CD4-positive, alpha-beta T cell (primary cell): ENCODE measurements at regions of chr7 and their contacts with region 1.

Region 1: GRCh38 chr7:151519765-151520418 is at the start of gene RHEB:
- DNase-seq: peak; percentile 97 to 99 (median 98)
- ATAC-seq: peak; percentile 85
- H3K4me3 ChIP-seq: peak within 1 kb of the TSS; percentile 62
- H3K4me3 Mint-ChIP-seq: peak within 1 kb of the TSS; percentile 99
- H3K27ac ChIP-seq: peak within 1 kb of the TSS; percentile 79
- H3K27ac Mint-ChIP-seq: peak within 1 kb of the TSS; percentile 98
- H3K4me1 ChIP-seq: peaks cover 37% of the 10 kb centered on the region
- H3K4me1 Mint-ChIP-seq: peaks cover 44% of the 10 kb centered on the region
- H3K27me3 ChIP-seq: no peaks in the 10 kb centered on the region
- H3K27me3 Mint-ChIP-seq: no peaks in the 10 kb centered on the region
- CTCF ChIP-seq: no peak
- total RNA-seq, gene RHEB: 40.3 to 42.6 TPM

Region 2: DNA sequence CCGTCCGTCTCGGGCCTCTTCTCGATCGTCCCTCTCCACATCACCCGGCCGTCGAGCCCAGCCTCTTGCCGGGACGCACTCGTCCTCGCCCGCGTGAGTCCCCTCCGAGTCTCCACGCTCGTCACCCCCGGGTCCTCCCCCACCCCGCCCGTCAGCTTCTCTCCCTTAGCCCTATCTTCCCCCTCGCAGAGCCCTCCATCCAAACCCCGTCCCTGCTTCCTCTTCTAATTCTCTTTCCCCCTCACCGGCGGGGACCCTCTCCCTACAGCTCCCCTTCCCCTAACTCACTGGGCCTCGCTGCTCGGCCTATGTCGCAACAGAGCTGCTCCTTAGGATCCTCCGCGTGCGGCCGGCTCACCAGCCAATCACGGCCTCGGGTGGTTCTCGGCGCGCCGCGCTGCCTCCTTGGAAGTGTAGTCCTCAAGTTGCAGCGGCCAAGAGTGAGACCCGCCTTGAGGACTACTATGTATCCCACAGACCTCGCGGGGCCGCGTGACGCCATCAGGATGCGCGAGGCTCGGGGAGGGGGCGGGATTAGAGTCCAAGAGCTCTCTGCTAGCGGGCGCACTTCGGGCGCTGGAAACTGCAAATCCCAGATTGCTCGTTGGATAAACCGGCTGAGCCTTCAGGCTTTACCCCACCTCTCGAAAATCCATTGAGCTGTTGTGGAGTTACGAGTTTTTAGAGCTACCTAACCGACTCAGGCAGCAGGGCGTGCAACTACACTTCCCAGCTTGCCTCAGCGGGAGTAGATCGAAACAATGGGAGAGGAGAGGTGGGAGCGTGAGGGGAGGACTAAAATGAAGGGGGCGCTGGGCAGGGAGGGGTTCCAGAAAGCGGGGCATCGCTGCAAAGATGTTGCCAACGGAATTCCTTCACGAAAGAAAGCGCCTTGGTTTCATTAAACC is 292.8 kb before region 1 on chr7 and contains the start of gene ABCF2:
- CTCF ChIA-PET with region 1: no interaction called
- POLR2A ChIA-PET with region 1: no interaction called
- intact Hi-C with region 1: loop called in 1 of 2 experiments (anchors 5 kb)
- DNase-seq: peak; percentile 93 to 99 (median 97)
- ATAC-seq: peak; percentile 99
- H3K4me3 ChIP-seq: peak within 1 kb of the TSS; percentile 90
- H3K4me3 Mint-ChIP-seq: peak within 1 kb of the TSS; percentile 99
- H3K27ac ChIP-seq: peak within 1 kb of the TSS; percentile 63 to 71
- H3K27ac Mint-ChIP-seq: peak within 1 kb of the TSS; percentile 90
- H3K4me1 ChIP-seq: peaks cover 38% of the 10 kb centered on the region
- H3K4me1 Mint-ChIP-seq: peaks cover 41% of the 10 kb centered on the region
- H3K27me3 ChIP-seq: no peaks in the 10 kb centered on the region
- H3K27me3 Mint-ChIP-seq: no peaks in the 10 kb centered on the region
- CTCF ChIP-seq: no peak
- total RNA-seq, gene ABCF2: 12.3 to 13.2 TPM

Region 3: DNA sequence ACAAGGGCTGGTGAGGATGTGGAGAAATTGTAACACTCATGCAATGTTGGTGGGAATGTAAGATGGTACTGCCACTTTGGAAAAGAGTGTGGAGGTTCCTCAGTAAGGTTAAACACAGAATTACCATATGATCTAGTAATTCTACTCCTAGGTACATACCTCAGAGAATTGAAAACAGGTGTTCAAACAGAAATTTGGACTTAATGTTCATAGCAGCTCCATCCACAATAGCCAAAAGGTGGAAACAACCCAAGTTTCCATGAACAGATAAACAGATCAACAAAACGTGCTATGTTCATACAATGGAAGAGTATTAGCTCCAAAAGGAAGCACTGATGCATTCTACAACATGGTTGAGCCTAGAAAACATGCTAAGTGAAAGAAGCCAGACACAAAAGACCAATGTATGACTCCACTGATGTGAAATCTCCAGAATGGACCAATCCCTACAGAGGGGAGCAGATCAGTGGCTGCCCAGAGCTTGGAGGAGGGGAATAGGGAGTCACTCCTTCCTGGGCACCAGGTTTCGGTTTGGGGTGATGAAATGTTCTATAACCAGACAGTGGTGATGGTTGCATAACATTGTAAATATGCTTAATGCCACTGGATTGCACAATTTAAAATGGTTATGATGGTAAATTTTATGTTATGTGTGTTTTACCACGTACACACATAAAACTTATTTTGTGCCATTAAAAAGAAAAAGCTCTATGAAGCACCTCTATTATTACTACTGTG is 104.3 kb before region 1 on chr7:
- CTCF ChIA-PET with region 1: no interaction called
- POLR2A ChIA-PET with region 1: no interaction called
- intact Hi-C with region 1: no loop called
- DNase-seq: peak in 3 of 14 experiments; percentile 23 to 70 (median 52)
- ATAC-seq: no peak
- H3K4me3 ChIP-seq: no peak overlapping the region
- H3K4me3 Mint-ChIP-seq: no peak overlapping the region
- H3K27ac ChIP-seq: no peak overlapping the region
- H3K27ac Mint-ChIP-seq: no peak overlapping the region
- H3K4me1 ChIP-seq: peaks cover 19% of the 10 kb centered on the region
- H3K4me1 Mint-ChIP-seq: peaks cover 14% of the 10 kb centered on the region
- H3K27me3 ChIP-seq: peaks cover 9 to 12% of the 10 kb centered on the region in 2 experiments
- H3K27me3 Mint-ChIP-seq: peaks cover 21% of the 10 kb centered on the region
- CTCF ChIP-seq: no peak

Region 4: DNA sequence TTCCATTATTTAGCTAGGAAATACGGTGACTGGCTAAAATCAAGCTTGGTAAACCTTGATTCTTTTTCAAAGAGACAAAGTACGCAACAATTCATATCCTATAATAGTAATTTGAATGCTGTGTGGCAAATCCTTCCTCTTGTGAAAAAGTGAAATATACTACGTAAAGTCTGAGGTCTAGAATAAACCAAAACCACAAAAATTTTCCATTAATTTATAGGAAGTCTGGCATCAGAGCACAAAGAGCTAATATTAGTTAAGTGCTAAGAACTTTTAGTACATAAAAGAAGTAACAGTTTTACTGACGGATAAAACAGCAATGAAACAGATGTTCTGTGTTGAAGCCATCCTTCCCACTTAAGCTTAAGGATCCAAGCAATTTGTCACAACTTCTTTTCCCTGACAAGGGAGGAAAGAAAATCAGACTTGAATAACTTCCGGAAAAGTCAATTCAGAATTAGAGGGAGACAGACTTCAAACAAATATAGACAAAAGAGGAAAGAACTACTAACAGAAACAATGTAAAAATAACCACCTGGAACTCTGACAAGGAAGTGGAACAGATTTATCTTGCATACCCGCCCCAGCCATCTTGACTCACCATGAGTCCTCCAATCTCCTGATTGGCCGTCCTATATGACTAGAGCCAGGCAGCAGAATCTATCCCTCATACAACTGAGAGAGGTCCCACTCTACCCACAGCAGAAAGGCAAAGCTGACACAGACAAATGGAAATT is 34.8 kb before region 1 on chr7:
- CTCF ChIA-PET with region 1: interaction called, 4 read pairs
- POLR2A ChIA-PET with region 1: interaction called, 4 read pairs
- intact Hi-C with region 1: loop called in 1 of 2 experiments (anchors 5 kb)
- DNase-seq: peak in 2 of 14 experiments; percentile 37 to 41
- ATAC-seq: no peak
- H3K4me3 ChIP-seq: no peak overlapping the region
- H3K4me3 Mint-ChIP-seq: no peak overlapping the region
- H3K27ac ChIP-seq: no peak overlapping the region
- H3K27ac Mint-ChIP-seq: no peak overlapping the region
- H3K4me1 ChIP-seq: no peaks in the 10 kb centered on the region
- H3K4me1 Mint-ChIP-seq: peaks cover 14% of the 10 kb centered on the region
- H3K27me3 ChIP-seq: no peaks in the 10 kb centered on the region
- H3K27me3 Mint-ChIP-seq: no peaks in the 10 kb centered on the region
- CTCF ChIP-seq: no peak

Region 5: GRCh38 chr7:151711906-151712809 is 192.3 kb after region 1 on chr7:
- CTCF ChIA-PET with region 1: no interaction called
- POLR2A ChIA-PET with region 1: no interaction called
- intact Hi-C with region 1: no loop called
- DNase-seq: no peak
- ATAC-seq: no peak
- H3K4me3 ChIP-seq: no peak overlapping the region
- H3K4me3 Mint-ChIP-seq: no peak overlapping the region
- H3K27ac ChIP-seq: no peak overlapping the region
- H3K27ac Mint-ChIP-seq: no peak overlapping the region
- H3K4me1 ChIP-seq: no peaks in the 10 kb centered on the region
- H3K4me1 Mint-ChIP-seq: peaks cover 5% of the 10 kb centered on the region
- H3K27me3 ChIP-seq: no peaks in the 10 kb centered on the region
- H3K27me3 Mint-ChIP-seq: no peaks in the 10 kb centered on the region
- CTCF ChIP-seq: no peak

Region 6: DNA sequence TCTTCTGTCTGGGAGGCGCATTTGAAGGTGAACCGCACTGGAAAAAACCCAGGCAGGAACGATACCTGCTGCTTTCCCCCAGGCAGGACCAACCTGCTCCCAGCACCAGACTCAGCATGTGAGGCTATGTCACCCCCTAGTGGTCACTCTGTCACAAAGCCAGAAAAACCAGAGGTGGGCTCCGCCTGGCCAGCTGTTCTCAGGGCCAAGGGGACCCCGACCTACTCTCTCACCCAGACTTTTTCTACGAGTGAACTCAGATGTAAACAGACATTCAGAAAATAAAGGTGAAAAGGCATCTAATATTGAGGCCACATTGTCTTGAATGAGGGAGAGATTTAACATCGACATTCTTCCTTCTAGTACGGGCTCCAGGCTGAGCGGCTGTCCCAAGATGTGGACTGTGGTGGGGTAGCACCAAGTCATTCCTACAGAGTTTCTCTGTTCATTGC is 239.7 kb after region 1 on chr7:
- CTCF ChIA-PET with region 1: no interaction called
- POLR2A ChIA-PET with region 1: interaction called, 5 read pairs
- intact Hi-C with region 1: loop called in 1 of 2 experiments (anchors 5 kb)
- DNase-seq: peak; percentile 31 to 79 (median 47)
- ATAC-seq: peak; percentile 46
- H3K4me3 ChIP-seq: no peak overlapping the region
- H3K4me3 Mint-ChIP-seq: no peak overlapping the region
- H3K27ac ChIP-seq: no peak overlapping the region
- H3K27ac Mint-ChIP-seq: peak overlapping the region; percentile 67
- H3K4me1 ChIP-seq: peaks cover 35% of the 10 kb centered on the region
- H3K4me1 Mint-ChIP-seq: peaks cover 40% of the 10 kb centered on the region
- H3K27me3 ChIP-seq: no peaks in the 10 kb centered on the region
- H3K27me3 Mint-ChIP-seq: no peaks in the 10 kb centered on the region
- CTCF ChIP-seq: peak; percentile 97

Region 7: DNA sequence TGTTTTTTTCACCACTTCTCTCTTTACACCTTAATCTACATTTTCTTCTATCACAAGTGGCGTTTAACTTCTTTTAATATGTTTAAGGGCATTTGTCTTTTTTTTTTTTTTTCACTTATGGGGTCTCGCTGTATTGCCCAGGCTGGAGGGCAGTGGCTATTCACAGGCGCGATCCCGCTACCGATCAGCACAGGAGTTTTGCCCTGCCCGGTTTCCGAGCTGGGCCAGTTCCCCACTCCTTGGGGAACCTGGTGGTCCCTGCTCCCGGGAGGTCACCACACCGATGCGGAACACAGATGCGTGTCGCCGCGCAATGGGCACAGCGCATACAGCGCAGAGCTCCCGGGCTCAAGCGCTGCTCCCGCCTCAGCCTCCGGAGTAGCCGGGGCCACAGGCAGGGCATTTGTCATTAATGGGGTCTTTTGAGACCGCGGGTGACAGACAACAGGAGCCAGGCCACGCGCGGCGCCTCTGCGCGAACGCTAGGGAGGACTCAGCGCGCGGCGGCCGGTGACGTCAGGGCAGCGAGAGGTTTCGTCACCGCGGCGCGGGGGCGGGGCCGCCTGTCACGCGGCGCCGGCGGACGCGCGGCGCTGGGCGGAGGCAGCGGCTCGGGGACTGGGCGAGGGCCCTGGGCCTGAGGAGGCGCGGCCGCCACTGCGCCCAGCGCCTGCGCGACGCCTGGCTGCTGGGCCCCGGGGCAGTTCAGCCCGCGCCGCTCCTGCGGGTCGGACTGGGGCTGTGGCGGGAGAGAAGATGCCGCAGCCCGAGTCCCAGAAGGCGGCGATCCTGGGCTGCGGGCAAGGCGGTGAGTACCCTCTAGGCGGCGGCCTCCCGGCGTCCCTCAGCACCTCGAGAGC is 505.4 kb after region 1 on chr7 and contains the start of gene GALNT11:
- CTCF ChIA-PET with region 1: no interaction called
- POLR2A ChIA-PET with region 1: no interaction called
- intact Hi-C with region 1: loop called in 1 of 2 experiments (anchors 5 kb)
- DNase-seq: peak; percentile 72 to 96 (median 82)
- ATAC-seq: peak; percentile 92
- H3K4me3 ChIP-seq: peak within 1 kb of the TSS; percentile 96
- H3K4me3 Mint-ChIP-seq: peak within 1 kb of the TSS; percentile 96
- H3K27ac ChIP-seq: peak within 1 kb of the TSS in 1 of 2 donors; percentile 82
- H3K27ac Mint-ChIP-seq: peak within 1 kb of the TSS; percentile 96
- H3K4me1 ChIP-seq: peaks cover 30% of the 10 kb centered on the region
- H3K4me1 Mint-ChIP-seq: peaks cover 42% of the 10 kb centered on the region
- H3K27me3 ChIP-seq: no peaks in the 10 kb centered on the region
- H3K27me3 Mint-ChIP-seq: no peaks in the 10 kb centered on the region
- CTCF ChIP-seq: no peak
- total RNA-seq, gene GALNT11: 20.7 to 22.2 TPM